Lower leg skin (tissue), 4 donors: ENCODE measurements at regions of chr5 and their contacts with region 1.

Region 1: GRCh38 chr5:175700991-175701390 is 43.1 kb downstream of the HRH2 start:
- DNase-seq: peak in 1 of 2 donors; percentile 40
- H3K4me3 ChIP-seq: no peak overlapping the region
- CTCF ChIP-seq: no peak
- POLR2A ChIP-seq: no peak

Region 2: DNA sequence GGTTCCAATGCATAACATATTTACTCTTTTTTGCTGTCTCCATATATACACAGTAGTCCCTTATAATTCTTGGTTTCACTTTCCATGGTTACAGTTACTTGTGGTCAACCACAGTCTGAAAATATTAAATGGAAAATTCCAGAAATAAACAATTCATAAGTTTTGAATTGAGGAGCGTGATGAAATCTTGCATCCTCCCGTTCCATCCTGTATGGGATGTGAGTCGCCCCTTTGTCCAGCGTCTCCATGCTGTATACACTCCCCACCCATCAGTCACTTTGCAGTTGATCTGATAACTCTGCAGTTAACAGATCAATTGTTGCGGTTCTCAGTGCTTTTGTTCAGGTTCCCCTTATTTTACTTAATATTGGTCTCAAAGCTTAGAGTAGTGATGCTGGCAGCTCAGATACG is 735.7 kb after region 1 on chr5:
- intact Hi-C with region 1: loop called (anchors 5 kb)
- DNase-seq: peak in 1 of 2 donors; percentile 8
- H3K4me3 ChIP-seq: no peak overlapping the region
- CTCF ChIP-seq: no peak
- POLR2A ChIP-seq: no peak